CD4-positive, alpha-beta T cell (primary cell): ENCODE measurements at regions of chr16 and their contacts with region 1.

Region 1: GRCh38 chr16:56317998-56318826 is 107.1 kb downstream of the AMFR start:
- DNase-seq: peak; percentile 58 to 84 (median 69)
- ATAC-seq: peak; percentile 99
- H3K4me3 ChIP-seq: peak overlapping the region; percentile 35
- H3K4me3 Mint-ChIP-seq: no peak overlapping the region
- H3K27ac ChIP-seq: no peak overlapping the region
- H3K27ac Mint-ChIP-seq: no peak overlapping the region
- H3K4me1 ChIP-seq: peaks cover 9% of the 10 kb centered on the region
- H3K4me1 Mint-ChIP-seq: no peaks in the 10 kb centered on the region
- H3K27me3 ChIP-seq: no peaks in the 10 kb centered on the region
- H3K27me3 Mint-ChIP-seq: no peaks in the 10 kb centered on the region
- CTCF ChIP-seq: peak; percentile 83

Region 2: DNA sequence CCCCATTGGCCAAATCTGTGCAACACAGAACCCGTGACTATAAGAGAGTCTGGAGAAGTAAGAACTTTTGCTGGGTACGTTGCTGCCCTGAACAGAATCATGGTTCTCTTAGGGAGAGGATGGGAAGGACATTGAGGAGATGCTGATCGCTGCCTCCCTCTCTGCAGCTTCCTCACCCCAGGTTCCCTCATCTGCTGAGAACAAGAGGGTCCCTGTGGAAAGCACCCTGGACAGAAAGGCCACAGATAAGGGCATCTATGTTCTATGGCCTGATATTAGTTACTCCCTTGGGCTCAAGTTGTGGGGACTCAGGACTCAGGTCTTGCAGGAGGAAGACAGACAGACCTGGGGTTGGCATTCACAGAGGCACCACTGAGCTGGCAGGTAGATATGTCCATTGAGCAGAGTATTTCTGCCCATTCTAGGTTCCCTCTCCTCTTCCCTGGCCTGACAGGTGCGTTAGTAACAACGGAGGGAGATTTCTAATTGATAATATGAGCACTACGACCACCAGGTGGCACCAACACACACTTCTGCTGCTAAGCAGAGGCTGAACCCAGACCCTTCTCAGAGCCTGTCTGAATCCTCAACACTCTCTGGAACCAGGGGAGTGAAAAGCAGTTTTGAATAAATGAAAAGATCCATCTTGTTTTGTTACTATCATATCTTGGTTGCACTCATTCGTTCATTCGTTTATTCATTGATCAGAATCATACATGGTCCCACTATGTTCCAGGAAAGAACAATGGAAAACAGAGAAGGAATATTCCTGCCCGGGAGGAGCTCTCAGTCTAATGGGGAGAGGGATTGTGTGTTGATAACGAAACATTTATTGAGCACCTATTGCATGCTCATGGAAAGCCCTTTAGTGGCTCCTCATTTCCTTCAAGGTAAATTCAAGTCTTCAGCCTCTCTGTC is 606.0 kb before region 1 on chr16:
- CTCF ChIA-PET with region 1: no interaction called
- POLR2A ChIA-PET with region 1: no interaction called
- intact Hi-C with region 1: loop called in 1 of 2 experiments (anchors 2 kb)
- DNase-seq: peak; percentile 22 to 72 (median 35)
- ATAC-seq: peak; percentile 34
- H3K4me3 ChIP-seq: no peak overlapping the region
- H3K4me3 Mint-ChIP-seq: no peak overlapping the region
- H3K27ac ChIP-seq: no peak overlapping the region
- H3K27ac Mint-ChIP-seq: no peak overlapping the region
- H3K4me1 ChIP-seq: no peaks in the 10 kb centered on the region
- H3K4me1 Mint-ChIP-seq: no peaks in the 10 kb centered on the region
- H3K27me3 ChIP-seq: peaks cover 4 to 10% of the 10 kb centered on the region in 2 experiments
- H3K27me3 Mint-ChIP-seq: peaks cover 61% of the 10 kb centered on the region
- CTCF ChIP-seq: peak; percentile 75

Region 3: DNA sequence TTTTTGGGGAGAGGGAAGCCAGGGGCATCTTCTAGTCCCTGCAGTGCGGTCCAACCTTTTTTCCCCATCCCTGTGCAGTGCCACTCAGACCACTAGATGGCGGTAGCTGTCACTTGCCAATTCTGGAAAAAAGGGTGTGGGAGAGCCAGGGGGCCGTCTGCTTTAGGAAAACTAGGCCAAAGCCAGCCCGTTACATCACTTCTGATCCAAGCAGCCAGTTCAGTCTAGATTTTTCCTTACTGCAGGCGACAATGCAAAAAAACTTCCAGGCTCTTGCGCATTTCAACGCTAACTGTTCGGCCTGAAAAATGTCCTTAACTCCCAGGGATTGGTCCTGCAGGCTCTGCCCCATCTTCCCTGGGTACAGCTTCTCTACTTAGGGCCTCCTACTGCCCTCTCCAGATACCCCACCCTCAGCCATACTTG is 373.8 kb before region 1 on chr16:
- CTCF ChIA-PET with region 1: interaction called, 29 read pairs
- POLR2A ChIA-PET with region 1: interaction called, 3 read pairs
- intact Hi-C with region 1: loop called (anchors 1 kb)
- DNase-seq: peak; percentile 21 to 70 (median 34)
- ATAC-seq: peak; percentile 37
- H3K4me3 ChIP-seq: no peak overlapping the region
- H3K4me3 Mint-ChIP-seq: no peak overlapping the region
- H3K27ac ChIP-seq: no peak overlapping the region
- H3K27ac Mint-ChIP-seq: no peak overlapping the region
- H3K4me1 ChIP-seq: no peaks in the 10 kb centered on the region
- H3K4me1 Mint-ChIP-seq: no peaks in the 10 kb centered on the region
- H3K27me3 ChIP-seq: peaks cover 14 to 21% of the 10 kb centered on the region in 2 experiments
- H3K27me3 Mint-ChIP-seq: peaks cover 71% of the 10 kb centered on the region
- CTCF ChIP-seq: peak; percentile 81

Region 4: DNA sequence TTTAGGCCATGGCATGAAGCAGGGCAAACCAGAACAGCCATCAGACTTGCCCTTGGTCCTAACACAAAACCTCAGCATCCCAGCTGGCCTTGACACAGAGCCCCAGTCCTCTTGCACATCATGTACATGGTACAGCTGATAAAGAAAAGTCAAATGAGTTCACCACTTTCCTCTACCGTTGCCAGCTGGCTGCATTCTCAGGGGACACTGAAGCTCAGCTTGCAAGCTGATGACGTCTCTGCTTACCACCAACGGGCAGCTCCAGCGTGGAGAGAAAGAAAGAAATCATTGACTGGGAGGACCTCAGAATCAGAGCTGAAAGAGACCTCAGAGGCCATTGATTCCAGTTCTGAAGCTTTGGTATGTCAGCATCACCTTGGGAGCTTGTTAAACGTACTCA is 362.4 kb before region 1 on chr16:
- CTCF ChIA-PET with region 1: no interaction called
- POLR2A ChIA-PET with region 1: no interaction called
- intact Hi-C with region 1: no loop called
- DNase-seq: no peak
- ATAC-seq: no peak
- H3K4me3 ChIP-seq: no peak overlapping the region
- H3K4me3 Mint-ChIP-seq: no peak overlapping the region
- H3K27ac ChIP-seq: no peak overlapping the region
- H3K27ac Mint-ChIP-seq: no peak overlapping the region
- H3K4me1 ChIP-seq: no peaks in the 10 kb centered on the region
- H3K4me1 Mint-ChIP-seq: no peaks in the 10 kb centered on the region
- H3K27me3 ChIP-seq: no peaks in the 10 kb centered on the region
- H3K27me3 Mint-ChIP-seq: peaks cover 5% of the 10 kb centered on the region
- CTCF ChIP-seq: no peak

Region 5: DNA sequence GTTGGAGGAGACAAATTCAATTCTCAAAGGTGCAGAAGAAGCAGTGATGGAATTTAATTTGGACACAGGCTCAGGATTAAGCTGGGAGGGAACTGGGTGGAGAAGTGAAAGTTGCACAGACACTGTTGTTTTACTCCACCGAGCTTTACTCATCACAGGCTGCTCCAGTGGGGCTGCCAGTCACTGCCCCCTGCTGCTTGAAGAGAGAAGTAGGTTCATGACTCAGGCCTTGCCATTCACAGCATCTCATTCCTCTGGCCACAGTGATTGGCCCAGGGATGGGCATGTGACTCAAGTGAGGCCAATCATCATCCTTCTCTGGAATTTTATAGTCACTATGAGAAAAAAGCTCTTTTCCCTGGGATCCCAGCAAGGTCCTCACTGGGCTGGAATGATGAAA is 115.2 kb before region 1 on chr16:
- CTCF ChIA-PET with region 1: interaction called, 10 read pairs
- POLR2A ChIA-PET with region 1: interaction called, 3 read pairs
- intact Hi-C with region 1: no loop called
- DNase-seq: peak in 13 of 14 experiments; percentile 17 to 81 (median 37)
- ATAC-seq: peak; percentile 78
- H3K4me3 ChIP-seq: no peak overlapping the region
- H3K4me3 Mint-ChIP-seq: no peak overlapping the region
- H3K27ac ChIP-seq: no peak overlapping the region
- H3K27ac Mint-ChIP-seq: no peak overlapping the region
- H3K4me1 ChIP-seq: peaks cover 45% of the 10 kb centered on the region
- H3K4me1 Mint-ChIP-seq: no peaks in the 10 kb centered on the region
- H3K27me3 ChIP-seq: no peaks in the 10 kb centered on the region
- H3K27me3 Mint-ChIP-seq: no peaks in the 10 kb centered on the region
- CTCF ChIP-seq: peak; percentile 47

Region 6: DNA sequence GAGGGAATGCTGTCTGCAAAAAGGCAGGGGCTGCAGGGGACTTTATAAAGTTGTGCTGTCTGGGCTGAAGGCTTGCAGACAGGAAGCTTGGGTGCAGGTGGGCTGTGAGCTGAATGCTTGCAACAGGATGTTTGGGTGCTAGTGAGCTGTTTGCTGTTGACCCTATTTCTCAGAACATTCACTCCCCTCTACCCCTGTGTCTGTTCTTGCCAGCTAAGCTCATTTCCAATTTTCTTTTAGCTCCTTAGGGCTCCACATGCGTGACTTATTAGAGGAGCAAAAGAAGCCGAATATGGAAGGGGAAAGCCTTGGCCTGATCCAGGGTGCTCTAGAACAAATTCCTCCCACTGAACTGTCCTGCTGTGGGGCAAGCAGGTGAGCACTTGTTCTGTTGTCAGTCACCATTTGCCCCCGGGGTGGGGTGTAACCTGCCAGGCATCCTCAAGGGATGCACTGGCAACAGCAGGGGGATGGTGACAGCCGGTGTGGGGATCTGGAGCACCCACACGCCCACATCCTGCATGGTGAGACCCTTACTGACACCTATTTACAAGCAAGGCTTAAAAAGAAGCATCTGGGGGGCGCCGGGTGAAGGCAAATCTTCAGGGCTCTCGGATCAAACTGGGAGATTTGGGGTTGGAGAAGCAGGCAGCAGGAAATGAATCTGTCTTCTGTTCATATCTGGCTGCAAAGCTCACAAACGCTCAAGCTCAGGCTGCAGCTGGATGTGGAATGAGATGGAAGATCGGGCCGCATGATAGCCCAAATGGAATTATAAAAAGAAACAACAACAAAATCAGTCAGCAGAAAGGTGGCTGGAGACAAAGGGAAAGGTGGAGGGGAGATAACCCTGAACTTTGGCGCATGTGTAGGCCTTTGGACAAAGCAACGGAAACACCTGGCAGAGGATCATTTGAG is 390.6 kb after region 1 on chr16:
- CTCF ChIA-PET with region 1: no interaction called
- POLR2A ChIA-PET with region 1: no interaction called
- intact Hi-C with region 1: loop called in 1 of 2 experiments (anchors 10 kb)
- DNase-seq: peak in 13 of 14 experiments; percentile 10 to 63 (median 41)
- ATAC-seq: peak; percentile 90
- H3K4me3 ChIP-seq: peak overlapping the region; percentile 35
- H3K4me3 Mint-ChIP-seq: peak overlapping the region; percentile 83
- H3K27ac ChIP-seq: peak overlapping the region in 1 of 2 donors; percentile 50
- H3K27ac Mint-ChIP-seq: peak overlapping the region; percentile 92
- H3K4me1 ChIP-seq: peaks cover 26% of the 10 kb centered on the region
- H3K4me1 Mint-ChIP-seq: peaks cover 28% of the 10 kb centered on the region
- H3K27me3 ChIP-seq: no peaks in the 10 kb centered on the region
- H3K27me3 Mint-ChIP-seq: no peaks in the 10 kb centered on the region
- CTCF ChIP-seq: no peak